ENCODE measurements at regions of chr22 and their contacts with region 1.

Region 1: DNA sequence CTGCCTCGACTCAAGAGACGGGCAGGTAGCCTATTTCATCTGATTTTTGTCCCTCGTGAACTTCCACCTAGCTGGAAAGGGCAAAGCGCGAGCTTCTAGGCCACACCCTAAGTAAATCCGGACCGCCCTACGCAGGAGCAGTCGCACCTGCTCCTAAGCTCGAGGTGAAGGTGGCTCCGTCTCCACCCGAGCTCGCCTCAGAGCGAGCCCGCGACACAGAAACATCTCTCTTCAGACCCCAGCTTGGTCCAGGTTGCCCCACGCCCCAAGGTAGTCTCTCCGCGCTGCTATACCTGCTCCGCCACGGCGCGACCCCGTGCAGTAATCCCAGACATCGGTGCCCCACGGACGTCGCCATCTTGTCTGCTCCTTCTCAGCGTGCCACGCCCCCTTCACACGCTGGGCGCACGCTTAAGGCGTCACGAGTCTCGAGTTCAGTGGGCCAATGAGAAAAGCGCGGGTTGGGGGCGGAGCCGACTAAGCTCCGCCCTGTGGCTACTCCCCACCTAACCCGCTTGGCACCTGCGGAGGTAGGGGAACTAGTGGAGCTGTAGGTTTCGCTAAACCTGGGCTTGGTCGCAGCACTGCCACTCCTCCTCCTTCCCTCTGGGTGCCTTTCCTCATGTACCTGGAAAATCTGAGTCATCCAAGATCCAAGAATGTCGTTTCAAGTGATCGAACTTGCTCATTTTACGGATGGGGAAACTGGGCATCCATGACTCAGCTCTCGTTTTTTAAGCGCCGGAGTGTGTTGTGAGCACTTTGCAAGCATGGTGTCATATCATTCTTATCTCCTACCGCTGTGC is at the start of gene PISD:
- DNase-seq: peak; percentile 96 to 97
- H3K4me3 ChIP-seq: peak within 1 kb of the TSS; percentile 71
- H3K4me3 Mint-ChIP-seq: peak within 1 kb of the TSS; percentile 97
- H3K27ac Mint-ChIP-seq: peak within 1 kb of the TSS; percentile 99
- H3K4me1 ChIP-seq: peaks cover 13% of the 10 kb centered on the region; the same call in 1 of the 2 replicates
- H3K4me1 Mint-ChIP-seq: peaks cover 20% of the 10 kb centered on the region
- H3K27me3 ChIP-seq: no peaks in the 10 kb centered on the region
- H3K27me3 Mint-ChIP-seq: no peaks in the 10 kb centered on the region
- CTCF ChIP-seq: no peak
- total RNA-seq, gene PISD: 56.7 and 58.7 TPM in 2 replicates

Region 2: DNA sequence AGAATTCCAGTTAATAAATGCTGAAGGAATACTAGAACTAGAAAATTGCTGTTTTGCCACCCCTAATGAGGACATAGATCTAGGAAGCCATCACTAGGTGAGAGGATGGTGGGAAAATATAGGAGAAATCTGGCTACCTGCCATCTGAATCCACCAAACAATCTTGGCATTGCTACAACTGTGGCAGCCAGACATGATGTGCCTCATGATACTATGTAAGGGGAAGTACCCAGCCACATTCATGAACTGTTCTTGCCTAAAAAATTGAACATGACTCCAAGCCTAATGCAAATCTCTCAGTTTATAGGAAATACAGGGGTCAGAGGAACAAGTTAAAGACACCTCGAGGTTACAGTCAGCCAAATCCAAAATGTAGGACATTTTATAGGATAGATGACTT is 92.9 kb before region 1 on chr22:
- CTCF ChIA-PET with region 1: no interaction called
- POLR2A ChIA-PET with region 1: no interaction called
- intact Hi-C with region 1: no loop called
- DNase-seq: no peak
- H3K4me3 ChIP-seq: no peak overlapping the region
- H3K4me3 Mint-ChIP-seq: no peak overlapping the region
- H3K27ac Mint-ChIP-seq: no peak overlapping the region
- H3K4me1 ChIP-seq: no peaks in the 10 kb centered on the region
- H3K4me1 Mint-ChIP-seq: peaks cover 11% of the 10 kb centered on the region
- H3K27me3 ChIP-seq: no peaks in the 10 kb centered on the region
- H3K27me3 Mint-ChIP-seq: no peaks in the 10 kb centered on the region
- CTCF ChIP-seq: no peak

Region 3: DNA sequence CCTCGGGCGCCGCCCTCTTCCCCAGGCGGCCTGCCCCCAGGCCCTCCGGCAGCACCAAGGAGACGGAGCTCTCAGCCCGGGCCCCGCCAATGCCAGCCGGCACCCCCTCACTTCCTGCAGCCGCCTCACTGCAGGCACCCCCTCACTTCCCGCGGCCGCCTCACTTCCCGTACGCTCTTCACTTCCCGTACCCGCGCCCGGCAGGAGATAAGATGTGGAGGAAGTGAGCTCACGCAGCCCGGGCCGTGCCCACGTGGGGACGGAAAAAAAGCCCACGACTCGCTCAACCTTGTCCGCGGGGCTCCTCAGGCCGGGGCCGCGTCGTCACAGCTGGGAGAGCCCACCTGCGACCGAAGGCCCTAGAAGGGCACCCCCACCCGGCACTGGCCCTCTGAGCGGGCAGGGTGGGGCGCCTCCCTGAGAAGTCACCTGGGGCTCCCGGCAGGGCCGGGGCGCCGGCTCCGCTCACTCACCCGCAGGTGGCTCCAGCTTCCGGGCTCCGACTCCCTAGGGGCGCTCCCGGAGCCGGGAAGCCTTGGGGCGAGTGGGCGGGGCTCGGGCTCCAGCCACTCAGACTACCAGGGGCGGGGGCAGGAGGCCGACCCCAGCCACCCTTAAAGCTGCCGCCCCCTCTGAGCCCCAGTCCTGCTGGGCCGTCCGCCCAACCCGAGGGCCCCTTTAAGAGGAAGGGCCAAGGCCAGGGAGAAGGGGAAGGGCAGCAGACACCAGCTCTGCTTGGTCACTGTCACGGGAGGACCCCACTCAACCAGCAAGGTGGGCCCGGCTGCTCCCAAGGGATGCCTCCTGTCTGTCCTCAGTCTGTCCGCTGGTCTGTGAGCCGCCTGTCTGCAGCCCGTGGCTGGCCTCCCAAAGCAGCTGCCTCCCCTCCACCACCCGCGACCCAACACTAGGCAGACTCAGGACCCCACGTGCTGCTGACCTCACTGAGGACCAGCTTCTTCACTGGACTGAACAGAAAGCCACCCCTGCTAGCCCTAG is 31.4 kb before region 1 on chr22:
- CTCF ChIA-PET with region 1: interaction called, 4 read pairs
- POLR2A ChIA-PET with region 1: interaction called, 12 read pairs
- intact Hi-C with region 1: loop called (anchors 2 kb)
- DNase-seq: peak; percentile 88 to 92
- H3K4me3 ChIP-seq: peak overlapping the region; percentile 60
- H3K4me3 Mint-ChIP-seq: peak overlapping the region; percentile 80
- H3K27ac Mint-ChIP-seq: peak overlapping the region; percentile 29
- H3K4me1 ChIP-seq: peaks cover 36% of the 10 kb centered on the region
- H3K4me1 Mint-ChIP-seq: peaks cover 29% of the 10 kb centered on the region
- H3K27me3 ChIP-seq: no peaks in the 10 kb centered on the region
- H3K27me3 Mint-ChIP-seq: no peaks in the 10 kb centered on the region
- CTCF ChIP-seq: no peak

Region 4: GRCh38 chr22:31646186-31647089 is 15.6 kb before region 1 on chr22:
- CTCF ChIA-PET with region 1: interaction called, 4 read pairs
- POLR2A ChIA-PET with region 1: interaction called, 28 read pairs
- intact Hi-C with region 1: loop called (anchors 2 kb)
- DNase-seq: peak; percentile 73 to 89
- H3K4me3 ChIP-seq: no peak overlapping the region
- H3K4me3 Mint-ChIP-seq: no peak overlapping the region
- H3K27ac Mint-ChIP-seq: peak overlapping the region; percentile 83
- H3K4me1 ChIP-seq: peaks cover 50% of the 10 kb centered on the region
- H3K4me1 Mint-ChIP-seq: no peaks in the 10 kb centered on the region
- H3K27me3 ChIP-seq: no peaks in the 10 kb centered on the region
- H3K27me3 Mint-ChIP-seq: no peaks in the 10 kb centered on the region
- CTCF ChIP-seq: no peak

Region 5: GRCh38 chr22:31676700-31677099 is 14.6 kb after region 1 on chr22:
- CTCF ChIA-PET with region 1: interaction called, 17 read pairs
- POLR2A ChIA-PET with region 1: interaction called, 31 read pairs
- intact Hi-C with region 1: no loop called
- DNase-seq: peak; percentile 98
- H3K4me3 ChIP-seq: peak overlapping the region; percentile 55
- H3K4me3 Mint-ChIP-seq: peak overlapping the region; percentile 90
- H3K27ac Mint-ChIP-seq: peak overlapping the region; percentile 89
- H3K4me1 ChIP-seq: peaks cover 5% of the 10 kb centered on the region; the same call in 1 of the 2 replicates
- H3K4me1 Mint-ChIP-seq: peaks cover 11% of the 10 kb centered on the region
- H3K27me3 ChIP-seq: no peaks in the 10 kb centered on the region
- H3K27me3 Mint-ChIP-seq: no peaks in the 10 kb centered on the region
- CTCF ChIP-seq: no peak

Region 6: DNA sequence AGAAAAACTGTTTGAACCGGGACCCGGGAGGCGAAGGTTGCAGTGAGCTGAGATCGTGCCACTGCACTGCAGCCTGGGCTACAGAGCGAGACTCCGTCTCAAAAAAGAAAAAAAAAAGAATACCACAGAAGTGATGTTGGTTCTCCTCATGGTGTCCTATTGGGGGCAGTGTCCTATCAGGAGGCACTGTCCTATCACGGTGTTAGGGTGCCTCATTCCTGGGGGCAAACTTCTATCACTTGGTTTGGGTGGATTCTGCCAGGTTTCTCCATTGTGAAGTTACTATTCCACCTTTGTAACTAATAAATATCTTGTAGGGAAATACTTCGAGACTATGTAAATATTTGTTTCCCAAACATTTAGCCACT is 68.3 kb after region 1 on chr22:
- CTCF ChIA-PET with region 1: no interaction called
- POLR2A ChIA-PET with region 1: no interaction called
- intact Hi-C with region 1: no loop called
- DNase-seq: no peak
- H3K4me3 ChIP-seq: no peak overlapping the region
- H3K4me3 Mint-ChIP-seq: no peak overlapping the region
- H3K27ac Mint-ChIP-seq: no peak overlapping the region
- H3K4me1 ChIP-seq: peaks cover 28% of the 10 kb centered on the region
- H3K4me1 Mint-ChIP-seq: peaks cover 7% of the 10 kb centered on the region
- H3K27me3 ChIP-seq: no peaks in the 10 kb centered on the region
- H3K27me3 Mint-ChIP-seq: no peaks in the 10 kb centered on the region
- CTCF ChIP-seq: peak in 1 of 2 experiments; percentile 10

Region 7: DNA sequence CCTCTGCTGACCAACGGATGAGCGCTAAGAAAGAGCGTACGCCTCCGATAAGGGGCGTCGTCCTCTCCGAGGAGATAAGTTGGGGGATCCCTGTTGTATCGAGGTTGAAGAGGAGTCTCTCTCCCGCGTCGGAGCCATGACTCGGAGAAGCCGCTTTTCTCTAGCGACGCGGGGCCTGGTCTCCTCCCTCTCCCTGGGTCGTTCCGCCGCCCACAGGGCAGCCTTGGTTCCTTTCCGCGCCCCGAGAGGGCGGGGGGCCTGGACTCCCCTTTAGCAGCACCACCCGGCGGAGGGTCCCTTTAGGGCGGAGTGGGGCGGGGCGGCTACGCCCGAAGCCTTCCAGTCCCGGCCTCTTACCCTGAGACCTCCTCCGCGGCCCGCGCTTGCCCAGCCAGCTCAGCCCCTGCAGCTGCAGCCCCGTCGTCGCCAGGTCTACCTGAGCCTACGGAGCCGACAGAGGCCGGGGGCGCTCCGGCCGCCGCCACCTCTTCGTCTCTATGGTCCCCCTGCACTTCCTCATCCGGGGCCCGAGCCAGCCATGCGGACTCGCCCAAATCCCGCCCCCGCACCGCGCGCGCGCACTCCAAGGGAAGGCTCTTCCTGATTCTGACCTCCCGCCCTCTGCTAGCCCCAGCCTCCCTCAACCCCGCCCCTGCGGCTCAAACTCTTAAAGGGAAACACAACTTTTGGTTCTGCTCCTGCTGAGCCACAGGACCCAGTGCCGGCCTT is 87.7 kb after region 1 on chr22 and contains the start of gene PRR14L:
- CTCF ChIA-PET with region 1: interaction called, 6 read pairs
- POLR2A ChIA-PET with region 1: interaction called, 31 read pairs
- intact Hi-C with region 1: loop called (anchors 2 kb)
- DNase-seq: peak; percentile 96 to 98
- H3K4me3 ChIP-seq: peak within 1 kb of the TSS; percentile 54
- H3K4me3 Mint-ChIP-seq: peak within 1 kb of the TSS; percentile 81
- H3K27ac Mint-ChIP-seq: peak within 1 kb of the TSS; percentile 87
- H3K4me1 ChIP-seq: peaks cover 35% of the 10 kb centered on the region
- H3K4me1 Mint-ChIP-seq: peaks cover 13% of the 10 kb centered on the region
- H3K27me3 ChIP-seq: no peaks in the 10 kb centered on the region
- H3K27me3 Mint-ChIP-seq: no peaks in the 10 kb centered on the region
- CTCF ChIP-seq: peak in 1 of 2 experiments; percentile 21
- total RNA-seq, gene PRR14L: 41.6 and 42.5 TPM in 2 replicates

Region 8: DNA sequence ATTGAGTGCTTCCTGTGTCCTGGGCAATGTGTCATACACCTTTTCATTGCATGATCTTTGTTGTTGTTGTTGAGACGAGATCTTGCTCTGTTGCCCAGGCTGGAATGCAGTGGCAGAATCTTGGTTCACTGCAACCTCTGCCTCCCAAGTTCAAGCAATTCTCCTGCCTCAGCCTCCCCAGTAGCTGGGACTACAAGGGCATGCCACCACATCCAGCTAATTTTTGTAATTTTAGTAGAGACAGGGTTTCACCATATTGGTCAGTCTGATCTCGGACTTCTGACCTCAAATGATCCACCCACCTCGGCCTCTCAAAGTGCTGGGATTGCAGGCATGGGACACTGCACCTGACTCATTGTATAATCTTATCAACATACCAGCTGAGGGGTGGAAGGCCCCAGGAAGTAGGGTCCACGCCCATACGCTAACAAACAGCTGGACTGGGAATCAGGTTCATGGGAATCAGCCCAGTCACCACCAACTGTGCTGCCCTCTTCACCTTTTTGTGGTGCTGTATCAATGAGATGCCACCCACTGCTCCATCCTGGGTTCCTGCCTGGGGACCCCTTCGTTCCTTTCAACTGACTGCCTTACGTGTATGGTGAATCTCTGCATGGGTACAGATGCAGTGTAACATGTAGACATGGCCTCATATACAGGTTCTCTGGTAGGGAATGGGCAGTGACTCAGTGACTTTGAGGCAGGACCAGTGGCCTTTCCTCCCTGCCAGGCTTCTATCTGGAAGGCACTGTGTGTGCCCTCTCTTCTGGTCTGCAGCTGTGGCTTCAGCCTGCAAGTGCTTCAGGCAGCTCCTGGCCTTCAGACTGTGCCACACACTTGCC is 249.7 kb after region 1 on chr22:
- CTCF ChIA-PET with region 1: no interaction called
- POLR2A ChIA-PET with region 1: no interaction called
- intact Hi-C with region 1: loop called (anchors 1 kb)
- DNase-seq: peak; percentile 58 to 75
- H3K4me3 ChIP-seq: no peak overlapping the region
- H3K4me3 Mint-ChIP-seq: no peak overlapping the region
- H3K27ac Mint-ChIP-seq: peak overlapping the region; percentile 53
- H3K4me1 ChIP-seq: peaks cover 34% of the 10 kb centered on the region
- H3K4me1 Mint-ChIP-seq: peaks cover 6% of the 10 kb centered on the region
- H3K27me3 ChIP-seq: no peaks in the 10 kb centered on the region
- H3K27me3 Mint-ChIP-seq: no peaks in the 10 kb centered on the region
- CTCF ChIP-seq: no peak

Region 9: GRCh38 chr22:31952459-31952858 is 290.4 kb after region 1 on chr22:
- CTCF ChIA-PET with region 1: interaction called, 5 read pairs
- POLR2A ChIA-PET with region 1: no interaction called
- intact Hi-C with region 1: loop called (anchors 5 kb)
- DNase-seq: no peak
- H3K4me3 ChIP-seq: no peak overlapping the region
- H3K4me3 Mint-ChIP-seq: no peak overlapping the region
- H3K27ac Mint-ChIP-seq: no peak overlapping the region
- H3K4me1 ChIP-seq: no peaks in the 10 kb centered on the region; the same call in 1 of the 2 replicates
- H3K4me1 Mint-ChIP-seq: peaks cover 17% of the 10 kb centered on the region
- H3K27me3 ChIP-seq: no peaks in the 10 kb centered on the region
- H3K27me3 Mint-ChIP-seq: no peaks in the 10 kb centered on the region
- CTCF ChIP-seq: peak in 1 of 2 experiments; percentile 1